ENCODE measurements at regions of chr2 and their contacts with region 1.

Region 1: GRCh38 chr2:238847841-238848690 is at the start of gene TWIST2:
- DNase-seq: peak; percentile 90
- H3K4me3 Mint-ChIP-seq: peak within 1 kb of the TSS; percentile 89
- H3K27ac Mint-ChIP-seq: peak within 1 kb of the TSS; percentile 49
- H3K4me1 Mint-ChIP-seq: peaks cover 13% of the 10 kb centered on the region
- H3K27me3 Mint-ChIP-seq: no peaks in the 10 kb centered on the region
- CTCF ChIP-seq: no peak
- total RNA-seq, gene TWIST2: 30.2 and 31.6 TPM in 2 replicates

Region 2: DNA sequence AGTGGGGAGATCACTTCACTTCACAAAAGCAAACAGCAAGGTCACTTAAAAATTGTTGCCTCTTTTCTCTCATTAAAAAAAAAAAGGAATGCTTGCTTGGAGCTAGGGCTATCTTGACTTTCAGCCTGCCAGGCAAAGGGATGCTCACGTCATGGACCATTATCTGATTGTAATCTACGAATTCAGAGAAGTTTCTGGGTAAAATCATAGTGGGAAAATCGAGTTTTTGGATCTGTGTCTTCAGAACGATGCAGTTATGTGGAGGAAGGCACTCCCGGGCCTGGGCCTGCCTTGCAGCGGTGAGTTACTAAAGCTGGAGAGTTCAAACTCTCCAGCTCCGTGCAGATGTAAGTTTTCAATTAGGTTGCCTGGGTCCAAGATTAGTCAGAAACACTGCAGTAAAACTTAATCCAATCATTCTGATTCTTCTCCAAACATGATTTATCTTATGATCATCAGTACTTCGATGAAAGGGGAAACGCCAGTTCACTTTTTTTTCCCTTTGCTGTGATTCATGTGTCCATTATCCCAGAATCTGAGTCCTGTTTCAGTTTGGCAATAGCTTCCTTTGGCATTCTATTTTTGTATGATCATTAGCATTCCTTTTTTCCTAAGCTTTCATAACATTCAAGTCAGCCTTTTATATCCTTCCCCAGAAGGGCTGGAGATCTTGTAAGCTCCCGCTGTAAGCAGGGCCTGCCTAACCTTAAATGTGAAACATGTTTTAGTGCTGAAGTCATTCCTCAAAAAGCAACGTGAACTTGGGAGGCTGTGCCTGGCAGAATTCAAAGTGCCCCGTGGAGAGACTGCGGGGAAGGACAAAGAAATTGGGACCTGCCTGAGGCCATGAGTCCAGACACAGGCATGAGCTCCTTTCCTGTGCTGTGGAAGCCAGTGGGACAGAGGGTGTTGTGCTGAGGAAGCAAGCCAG is 119.5 kb before region 1 on chr2:
- CTCF ChIA-PET with region 1: interaction called, 6 read pairs
- POLR2A ChIA-PET with region 1: interaction called, 15 read pairs
- intact Hi-C with region 1: no loop called
- DNase-seq: peak; percentile 68
- H3K4me3 Mint-ChIP-seq: peak overlapping the region; percentile 28
- H3K27ac Mint-ChIP-seq: peak overlapping the region; percentile 90
- H3K4me1 Mint-ChIP-seq: peaks cover 42% of the 10 kb centered on the region
- H3K27me3 Mint-ChIP-seq: no peaks in the 10 kb centered on the region
- CTCF ChIP-seq: no peak

Region 3: GRCh38 chr2:238864207-238865014 is 16.3 kb after region 1 on chr2:
- CTCF ChIA-PET with region 1: interaction called, 5 read pairs
- POLR2A ChIA-PET with region 1: interaction called, 54 read pairs
- intact Hi-C with region 1: no loop called
- DNase-seq: peak; percentile 98
- H3K4me3 Mint-ChIP-seq: peak overlapping the region; percentile 61
- H3K27ac Mint-ChIP-seq: peak overlapping the region; percentile 95
- H3K4me1 Mint-ChIP-seq: peaks cover 59% of the 10 kb centered on the region
- H3K27me3 Mint-ChIP-seq: no peaks in the 10 kb centered on the region
- CTCF ChIP-seq: no peak

Region 4: DNA sequence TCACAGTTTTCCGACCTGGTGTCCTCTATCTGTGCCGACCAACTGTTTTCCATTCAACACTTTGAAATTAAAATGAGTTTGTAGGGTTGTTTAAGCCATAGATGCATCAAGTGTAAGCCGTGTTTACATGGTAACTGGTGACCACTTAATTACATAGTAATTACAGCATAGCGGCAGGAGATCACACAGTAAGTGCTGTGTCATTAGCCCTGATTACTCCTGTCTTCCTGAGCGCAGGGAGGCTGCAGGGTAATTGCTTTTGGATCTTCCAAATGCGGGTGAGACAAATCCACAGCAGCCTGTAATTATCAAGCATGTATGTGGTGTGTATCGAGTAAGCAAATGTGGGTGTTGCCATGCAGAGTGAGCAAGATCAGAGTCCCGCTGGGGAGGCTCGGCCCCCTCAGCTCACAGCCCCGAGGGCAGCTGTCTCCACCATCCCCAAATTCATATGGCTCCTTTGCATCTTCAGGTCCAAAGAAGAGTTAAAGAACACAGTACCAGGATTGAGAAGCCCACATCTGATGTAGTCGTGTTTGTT is 624.2 kb after region 1 on chr2:
- CTCF ChIA-PET with region 1: no interaction called
- POLR2A ChIA-PET with region 1: no interaction called
- intact Hi-C with region 1: no loop called
- DNase-seq: no peak
- H3K4me3 Mint-ChIP-seq: no peak overlapping the region
- H3K27ac Mint-ChIP-seq: no peak overlapping the region
- H3K4me1 Mint-ChIP-seq: no peaks in the 10 kb centered on the region
- H3K27me3 Mint-ChIP-seq: peaks cover 29% of the 10 kb centered on the region
- CTCF ChIP-seq: no peak